Activated B cell treated with CpG ODN at 0.5 μM for 24 hours (primary cell): ENCODE measurements at regions of chr3 and their contacts with region 1.

Region 1: GRCh38 chr3:10192953-10193691 is 28.4 kb downstream of the IRAK2 start:
- DNase-seq: peak; percentile 53
- ATAC-seq: peak; percentile 58
- H3K4me3 Mint-ChIP-seq: peak overlapping the region; percentile 79
- H3K27ac Mint-ChIP-seq: peak overlapping the region; percentile 99
- H3K4me1 Mint-ChIP-seq: peaks cover 88% of the 10 kb centered on the region
- H3K27me3 Mint-ChIP-seq: no peaks in the 10 kb centered on the region
- CTCF ChIP-seq: no peak

Region 2: GRCh38 chr3:9878700-9879099 is 314.4 kb before region 1 on chr3:
- CTCF ChIA-PET with region 1: no interaction called
- POLR2A ChIA-PET with region 1: no interaction called
- intact Hi-C with region 1: no loop called
- DNase-seq: no peak
- ATAC-seq: no peak
- H3K4me3 Mint-ChIP-seq: no peak overlapping the region
- H3K27ac Mint-ChIP-seq: no peak overlapping the region
- H3K4me1 Mint-ChIP-seq: no peaks in the 10 kb centered on the region
- H3K27me3 Mint-ChIP-seq: peaks cover 7% of the 10 kb centered on the region
- CTCF ChIP-seq: no peak

Region 3: DNA sequence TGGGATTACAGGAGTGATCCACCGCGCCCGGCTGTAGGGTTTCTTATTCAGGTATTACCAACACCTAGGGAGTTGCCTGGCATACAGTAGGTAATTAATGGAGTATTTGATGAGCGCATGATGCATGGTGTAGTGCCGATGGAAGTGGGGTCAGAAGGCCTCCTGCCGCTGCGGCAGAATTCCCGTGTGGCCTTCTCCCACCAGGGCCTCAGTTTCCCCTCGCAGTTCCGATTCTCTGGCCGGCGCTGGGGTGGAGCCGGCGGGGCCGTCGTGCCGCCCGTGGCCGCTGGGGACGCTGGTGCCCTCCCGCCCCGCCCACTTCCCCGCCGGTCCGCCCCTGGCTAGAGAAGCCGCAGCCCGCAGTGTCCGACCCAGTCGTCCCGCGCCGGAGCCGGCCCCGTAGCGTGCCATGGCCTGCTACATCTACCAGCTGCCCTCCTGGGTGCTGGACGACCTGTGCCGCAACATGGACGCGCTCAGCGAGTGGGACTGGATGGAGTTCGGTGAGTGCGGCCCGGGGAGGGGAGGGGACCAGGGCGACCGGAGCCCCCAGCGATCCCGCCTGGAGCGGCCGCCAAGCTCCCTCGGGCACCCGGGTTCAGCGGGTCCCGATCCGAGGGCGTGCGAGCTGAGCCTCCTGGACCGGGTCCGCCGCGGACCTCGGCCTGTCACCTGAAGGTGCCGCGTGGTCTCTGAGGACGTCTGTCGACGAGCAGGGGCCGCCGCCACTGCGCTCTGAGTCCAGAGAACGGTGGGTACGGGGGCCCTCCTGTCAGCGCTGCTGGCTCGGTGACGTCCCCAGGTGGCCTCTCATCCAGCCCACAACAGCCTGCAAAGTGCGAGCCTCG is 28.4 kb before region 1 on chr3 and contains the start of gene IRAK2:
- CTCF ChIA-PET with region 1: interaction called, 9 read pairs
- POLR2A ChIA-PET with region 1: interaction called, 13 read pairs
- intact Hi-C with region 1: loop called (anchors 1 kb)
- DNase-seq: peak; percentile 65
- ATAC-seq: peak; percentile 91
- H3K4me3 Mint-ChIP-seq: peak within 1 kb of the TSS; percentile 86
- H3K27ac Mint-ChIP-seq: no peak within 1 kb of the TSS
- H3K4me1 Mint-ChIP-seq: peaks cover 38% of the 10 kb centered on the region
- H3K27me3 Mint-ChIP-seq: no peaks in the 10 kb centered on the region
- CTCF ChIP-seq: peak; percentile 64
- total RNA-seq, gene IRAK2: 8.6 and 8.8 TPM in 2 replicates

Region 4: DNA sequence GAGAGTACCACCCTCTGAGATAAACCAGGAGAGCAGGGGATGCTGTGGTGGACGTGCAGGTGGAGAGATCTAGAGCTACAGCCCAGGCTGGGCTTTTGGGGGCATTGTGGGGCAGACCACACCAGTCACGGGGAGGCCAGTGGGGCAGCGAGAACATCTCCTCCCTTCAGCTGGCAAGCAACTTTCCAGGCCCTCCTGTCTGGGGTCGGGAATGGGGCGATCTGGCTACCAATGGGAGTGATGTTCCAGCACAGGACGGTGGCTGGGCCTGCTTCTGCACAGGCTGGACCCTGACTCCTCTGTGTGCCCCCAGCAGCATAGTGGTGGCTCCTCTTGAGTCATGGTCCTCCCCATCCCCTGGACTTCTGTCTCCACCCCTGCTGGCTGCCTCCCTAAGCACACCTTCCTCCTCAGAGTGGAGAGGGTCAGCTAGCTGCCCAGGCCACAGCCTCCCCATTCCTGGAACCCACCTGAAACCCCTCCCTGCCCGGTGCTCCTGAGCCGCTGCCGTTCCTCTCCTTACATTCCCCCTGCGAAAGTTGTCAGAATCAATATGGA is 12.3 kb before region 1 on chr3:
- CTCF ChIA-PET with region 1: interaction called, 3 read pairs
- POLR2A ChIA-PET with region 1: interaction called, 17 read pairs
- intact Hi-C with region 1: loop called (anchors 1 kb)
- DNase-seq: no peak
- ATAC-seq: no peak
- H3K4me3 Mint-ChIP-seq: peak overlapping the region; percentile 28
- H3K27ac Mint-ChIP-seq: peak overlapping the region; percentile 83
- H3K4me1 Mint-ChIP-seq: peaks cover 38% of the 10 kb centered on the region
- H3K27me3 Mint-ChIP-seq: no peaks in the 10 kb centered on the region
- CTCF ChIP-seq: no peak

Region 5: GRCh38 chr3:10219737-10220136 is 26.6 kb after region 1 on chr3:
- CTCF ChIA-PET with region 1: interaction called, 43 read pairs
- POLR2A ChIA-PET with region 1: interaction called, 148 read pairs
- intact Hi-C with region 1: loop called (anchors 1 kb)
- DNase-seq: no peak
- ATAC-seq: no peak
- H3K4me3 Mint-ChIP-seq: no peak overlapping the region
- H3K27ac Mint-ChIP-seq: peak overlapping the region; percentile 91
- H3K4me1 Mint-ChIP-seq: peaks cover 54% of the 10 kb centered on the region
- H3K27me3 Mint-ChIP-seq: no peaks in the 10 kb centered on the region
- CTCF ChIP-seq: no peak